CD4-positive, alpha-beta memory T cell (primary cell): ENCODE measurements at regions of chr18 and their contacts with region 1.

Region 1: GRCh38 chr18:62249478-62250097 is 62.5 kb downstream of the RELCH start:
- DNase-seq: peak; percentile 50 to 72 (median 58)
- H3K4me3 ChIP-seq: no peak overlapping the region
- H3K4me3 Mint-ChIP-seq: no peak overlapping the region
- H3K27ac ChIP-seq: no peak overlapping the region
- H3K27ac Mint-ChIP-seq: no peak overlapping the region
- H3K4me1 ChIP-seq: no peaks in the 10 kb centered on the region
- H3K4me1 Mint-ChIP-seq: no peaks in the 10 kb centered on the region
- H3K27me3 ChIP-seq: no peaks in the 10 kb centered on the region
- H3K27me3 Mint-ChIP-seq: no peaks in the 10 kb centered on the region

Region 2: GRCh38 chr18:62198259-62198658 is 51.3 kb before region 1 on chr18:
- CTCF ChIA-PET with region 1: interaction called, 38 read pairs
- POLR2A ChIA-PET with region 1: no interaction called
- intact Hi-C with region 1: no loop called
- DNase-seq: no peak
- H3K4me3 ChIP-seq: no peak overlapping the region
- H3K4me3 Mint-ChIP-seq: peak overlapping the region in 3 of 8 donors; percentile 13 to 58 (median 40)
- H3K27ac ChIP-seq: no peak overlapping the region
- H3K27ac Mint-ChIP-seq: peak overlapping the region in 6 of 7 donors; percentile 12 to 64 (median 34)
- H3K4me1 ChIP-seq: peaks cover 59% of the 10 kb centered on the region
- H3K4me1 Mint-ChIP-seq: peaks cover 45 to 69% (median 57%) of the 10 kb centered on the region in 4 donors
- H3K27me3 ChIP-seq: no peaks in the 10 kb centered on the region
- H3K27me3 Mint-ChIP-seq: no peaks in the 10 kb centered on the region

Region 3: GRCh38 chr18:62239475-62239874 is 10.1 kb before region 1 on chr18:
- CTCF ChIA-PET with region 1: interaction called, 29 read pairs
- POLR2A ChIA-PET with region 1: no interaction called
- intact Hi-C with region 1: no loop called
- DNase-seq: no peak
- H3K4me3 ChIP-seq: no peak overlapping the region
- H3K4me3 Mint-ChIP-seq: no peak overlapping the region
- H3K27ac ChIP-seq: no peak overlapping the region
- H3K27ac Mint-ChIP-seq: no peak overlapping the region
- H3K4me1 ChIP-seq: no peaks in the 10 kb centered on the region
- H3K4me1 Mint-ChIP-seq: peaks cover 11 to 18% (median 15%) of the 10 kb centered on the region in 4 donors
- H3K27me3 ChIP-seq: no peaks in the 10 kb centered on the region
- H3K27me3 Mint-ChIP-seq: no peaks in the 10 kb centered on the region

Region 4: GRCh38 chr18:62264984-62265383 is 15.4 kb after region 1 on chr18:
- CTCF ChIA-PET with region 1: interaction called, 12 read pairs
- POLR2A ChIA-PET with region 1: interaction called, 3 read pairs
- intact Hi-C with region 1: no loop called
- DNase-seq: no peak
- H3K4me3 ChIP-seq: no peak overlapping the region
- H3K4me3 Mint-ChIP-seq: no peak overlapping the region
- H3K27ac ChIP-seq: no peak overlapping the region
- H3K27ac Mint-ChIP-seq: peak overlapping the region in 1 of 7 donors; percentile 23
- H3K4me1 ChIP-seq: no peaks in the 10 kb centered on the region
- H3K4me1 Mint-ChIP-seq: peaks cover 0 to 5% (median 2%) of the 10 kb centered on the region in 4 donors
- H3K27me3 ChIP-seq: no peaks in the 10 kb centered on the region
- H3K27me3 Mint-ChIP-seq: no peaks in the 10 kb centered on the region